ENCODE measurements at regions of chr5 and their contacts with region 1.

Region 1: GRCh38 chr5:110757118-110757729 is 18.4 kb downstream of the SLC25A46 start:
- DNase-seq: no peak
- ATAC-seq: no peak
- H3K4me3 ChIP-seq: no peak overlapping the region
- H3K27ac ChIP-seq: no peak overlapping the region
- H3K4me1 ChIP-seq: no peaks in the 10 kb centered on the region
- H3K27me3 ChIP-seq: no peaks in the 10 kb centered on the region

Region 2: GRCh38 chr5:110681109-110681508 is 76.1 kb before region 1 on chr5:
- intact Hi-C with region 1: no loop called
- DNase-seq: no peak
- ATAC-seq: no peak
- H3K4me3 ChIP-seq: no peak overlapping the region
- H3K27ac ChIP-seq: no peak overlapping the region
- H3K4me1 ChIP-seq: no peaks in the 10 kb centered on the region
- H3K27me3 ChIP-seq: no peaks in the 10 kb centered on the region

Region 3: GRCh38 chr5:111092062-111092853 is 335.0 kb after region 1 on chr5 and contains the start of gene WDR36:
- intact Hi-C with region 1: loop called in 1 of 4 experiments (anchors 10 kb)
- DNase-seq: peak; percentile 90 to 95 (median 95)
- ATAC-seq: peak; percentile 99
- H3K4me3 ChIP-seq: peak within 1 kb of the TSS; percentile 80
- H3K27ac ChIP-seq: peak within 1 kb of the TSS; percentile 55
- H3K4me1 ChIP-seq: no peaks in the 10 kb centered on the region
- H3K27me3 ChIP-seq: no peaks in the 10 kb centered on the region
- total RNA-seq, gene WDR36: 13.0 to 14.8 (median 14.1) TPM